ENCODE measurements at regions of chr1 and their contacts with region 1.

Region 1: DNA sequence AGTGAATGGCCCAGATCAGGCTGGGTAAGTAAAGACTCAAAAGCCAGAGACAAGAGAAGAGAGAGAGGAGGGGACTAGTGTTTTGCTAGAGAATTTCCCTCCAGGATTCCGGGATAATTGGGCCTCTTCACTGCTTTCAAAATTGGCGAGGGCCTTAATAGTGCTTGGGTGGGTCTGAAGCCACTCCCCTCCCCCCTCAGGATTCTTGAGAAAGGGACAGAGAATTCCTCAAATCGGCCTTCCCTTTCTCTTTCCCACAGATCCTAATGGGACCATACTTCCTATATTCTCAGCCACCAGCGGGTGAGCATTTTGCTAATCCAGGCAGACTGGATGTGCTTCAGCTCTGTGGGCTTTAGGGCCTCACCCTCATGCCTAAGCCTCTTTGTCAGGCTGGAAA is 11.9 kb downstream of the SFN start:
- DNase-seq: no peak
- ATAC-seq: no peak
- H3K4me3 ChIP-seq: no peak overlapping the region
- H3K27ac ChIP-seq: no peak overlapping the region
- H3K4me1 ChIP-seq: no peaks in the 10 kb centered on the region
- H3K27me3 ChIP-seq: no peaks in the 10 kb centered on the region
- CTCF ChIP-seq: no peak
- EP300 ChIP-seq: no peak
- POLR2A ChIP-seq: no peak
- RAD21 ChIP-seq: no peak

Region 2: DNA sequence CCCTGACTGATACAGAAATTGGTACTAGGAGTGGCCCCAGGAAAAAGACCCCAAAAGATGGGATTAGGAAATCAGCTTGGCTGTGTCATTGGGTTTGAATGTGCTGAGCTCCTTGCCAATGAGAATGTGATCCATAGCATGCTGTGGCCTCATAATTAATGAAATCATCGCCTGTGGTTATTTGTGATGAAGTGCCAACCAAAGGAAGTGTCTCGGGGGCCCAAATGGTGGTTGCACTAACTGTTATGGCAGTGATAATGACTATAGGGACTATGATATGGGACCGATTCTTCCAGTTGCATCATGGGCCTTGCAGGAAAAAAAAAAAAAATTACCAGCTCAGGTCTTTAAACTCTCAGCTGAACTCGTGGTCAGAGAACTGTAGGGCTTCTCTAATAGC is 63.8 kb before region 1 on chr1:
- CTCF ChIA-PET with region 1: interaction called, 7 read pairs
- POLR2A ChIA-PET with region 1: no interaction called
- in situ Hi-C with region 1: no loop called
- intact Hi-C with region 1: loop called (anchors 5 kb)
- DNase-seq: no peak
- ATAC-seq: no peak
- H3K4me3 ChIP-seq: no peak overlapping the region
- H3K27ac ChIP-seq: no peak overlapping the region
- H3K4me1 ChIP-seq: no peaks in the 10 kb centered on the region; a peak in 2 of 5 replicates
- H3K27me3 ChIP-seq: no peaks in the 10 kb centered on the region
- CTCF ChIP-seq: no peak
- EP300 ChIP-seq: no peak
- POLR2A ChIP-seq: no peak
- RAD21 ChIP-seq: no peak

Measured in K562 (cell line).